CD4-positive, alpha-beta memory T cell (primary cell): ENCODE measurements at regions of chr5 and their contacts with region 1.

Region 1: DNA sequence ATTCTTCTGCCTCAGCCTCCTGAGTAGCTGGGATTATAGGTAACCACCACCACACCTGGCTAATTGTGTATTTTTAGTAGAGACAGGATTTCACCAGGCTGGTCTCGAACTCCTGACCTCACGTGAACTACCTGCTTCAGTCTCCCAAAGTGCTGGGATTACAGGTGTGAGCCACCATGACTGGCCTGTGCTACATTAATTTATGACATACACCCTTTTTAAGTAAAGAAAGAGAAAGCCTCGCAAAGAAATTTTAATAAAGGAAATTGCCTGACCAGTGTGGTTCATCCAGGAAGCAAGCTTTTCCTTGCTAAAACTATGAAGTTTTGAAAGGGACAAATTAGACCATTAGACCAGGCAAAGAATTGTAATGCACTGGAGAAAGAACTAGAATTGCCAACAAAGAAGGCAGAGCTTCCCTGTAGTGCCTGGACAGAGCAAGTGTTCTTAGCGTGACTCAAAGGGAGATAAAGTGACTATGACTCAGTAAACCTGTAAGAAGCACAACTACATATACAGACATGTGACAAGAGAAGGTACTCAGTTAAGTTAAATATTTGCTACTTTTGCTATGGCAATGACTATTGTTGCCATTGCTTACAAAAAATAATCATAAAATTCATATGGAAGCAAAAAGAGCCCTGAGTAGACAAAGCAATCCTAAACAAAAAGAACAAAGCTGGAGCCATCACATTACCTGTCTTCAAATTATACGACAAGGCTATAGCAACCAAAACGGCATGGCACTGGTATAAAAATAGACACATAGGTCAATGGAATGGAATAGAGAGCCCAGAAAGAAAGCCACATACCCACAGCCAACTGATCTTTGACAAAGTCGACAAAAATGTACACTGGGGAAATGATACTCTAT is 54.6 kb downstream of the FYB1 start:
- DNase-seq: peak in 2 of 5 donors; percentile 37 to 62
- H3K4me3 ChIP-seq: peak overlapping the region in 1 of 2 donors; percentile 34
- H3K4me3 Mint-ChIP-seq: peak overlapping the region; percentile 42 to 83 (median 78)
- H3K27ac ChIP-seq: peak overlapping the region; percentile 54
- H3K27ac Mint-ChIP-seq: peak overlapping the region; percentile 87 to 94 (median 94)
- H3K4me1 ChIP-seq: peaks cover 100% of the 10 kb centered on the region
- H3K4me1 Mint-ChIP-seq: peaks cover 68 to 96% (median 80%) of the 10 kb centered on the region in 4 donors
- H3K27me3 ChIP-seq: no peaks in the 10 kb centered on the region
- H3K27me3 Mint-ChIP-seq: no peaks in the 10 kb centered on the region

Region 2: DNA sequence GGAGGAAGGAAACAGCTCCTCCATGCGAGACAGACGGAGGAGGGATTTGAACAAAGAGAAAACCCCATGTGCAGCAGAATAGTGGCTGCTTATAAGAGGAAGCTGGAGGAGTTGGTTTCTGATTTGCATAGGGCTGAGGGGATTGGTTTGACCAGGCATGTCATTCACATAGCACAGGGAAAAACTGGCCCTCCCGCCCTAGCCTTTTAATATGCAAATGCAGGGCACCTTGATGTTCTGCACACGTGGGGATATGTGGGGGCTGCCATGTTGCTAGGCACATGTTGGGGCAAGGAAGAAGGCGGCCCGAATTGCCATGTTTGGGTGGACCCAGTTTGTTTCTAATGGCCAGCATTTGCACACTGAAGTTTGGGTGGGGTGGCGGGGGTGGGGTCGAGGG is 276.7 kb before region 1 on chr5:
- CTCF ChIA-PET with region 1: no interaction called
- POLR2A ChIA-PET with region 1: no interaction called
- intact Hi-C with region 1: no loop called
- DNase-seq: no peak
- H3K4me3 ChIP-seq: no peak overlapping the region
- H3K4me3 Mint-ChIP-seq: no peak overlapping the region
- H3K27ac ChIP-seq: no peak overlapping the region
- H3K27ac Mint-ChIP-seq: no peak overlapping the region
- H3K4me1 ChIP-seq: no peaks in the 10 kb centered on the region
- H3K4me1 Mint-ChIP-seq: peaks cover 0 to 1% (median 0%) of the 10 kb centered on the region in 4 donors
- H3K27me3 ChIP-seq: peaks cover 5% of the 10 kb centered on the region
- H3K27me3 Mint-ChIP-seq: peaks cover 12 to 14% of the 10 kb centered on the region in 2 donors

Region 3: GRCh38 chr5:39187831-39188731 is 23.3 kb after region 1 on chr5:
- CTCF ChIA-PET with region 1: interaction called, 252 read pairs
- POLR2A ChIA-PET with region 1: interaction called, 1,810 read pairs
- intact Hi-C with region 1: no loop called
- DNase-seq: peak in 2 of 5 donors; percentile 58 to 70
- H3K4me3 ChIP-seq: peak overlapping the region in 1 of 2 donors; percentile 9
- H3K4me3 Mint-ChIP-seq: peak overlapping the region; percentile 84 to 96 (median 90)
- H3K27ac ChIP-seq: peak overlapping the region; percentile 59
- H3K27ac Mint-ChIP-seq: peak overlapping the region; percentile 95 to 99 (median 99)
- H3K4me1 ChIP-seq: peaks cover 98% of the 10 kb centered on the region
- H3K4me1 Mint-ChIP-seq: peaks cover 71 to 96% (median 83%) of the 10 kb centered on the region in 4 donors
- H3K27me3 ChIP-seq: no peaks in the 10 kb centered on the region
- H3K27me3 Mint-ChIP-seq: no peaks in the 10 kb centered on the region

Region 4: GRCh38 chr5:39194466-39195136 is 29.8 kb after region 1 on chr5:
- CTCF ChIA-PET with region 1: interaction called, 252 read pairs
- POLR2A ChIA-PET with region 1: interaction called, 1,810 read pairs
- intact Hi-C with region 1: loop called (anchors 5 kb)
- DNase-seq: no peak
- H3K4me3 ChIP-seq: peak overlapping the region; percentile 13 to 49
- H3K4me3 Mint-ChIP-seq: peak overlapping the region; percentile 84 to 92 (median 88)
- H3K27ac ChIP-seq: peak overlapping the region; percentile 59
- H3K27ac Mint-ChIP-seq: peak overlapping the region; percentile 90 to 98 (median 95)
- H3K4me1 ChIP-seq: peaks cover 77% of the 10 kb centered on the region
- H3K4me1 Mint-ChIP-seq: peaks cover 53 to 79% (median 66%) of the 10 kb centered on the region in 4 donors
- H3K27me3 ChIP-seq: no peaks in the 10 kb centered on the region
- H3K27me3 Mint-ChIP-seq: no peaks in the 10 kb centered on the region

Region 5: GRCh38 chr5:39202597-39203274 is 38.0 kb after region 1 on chr5:
- CTCF ChIA-PET with region 1: interaction called, 14 read pairs
- POLR2A ChIA-PET with region 1: interaction called, 1,810 read pairs
- intact Hi-C with region 1: loop called (anchors 5 kb)
- DNase-seq: peak; percentile 59 to 70 (median 67)
- H3K4me3 ChIP-seq: peak overlapping the region; percentile 74 to 96
- H3K4me3 Mint-ChIP-seq: peak overlapping the region; percentile 94 to 100 (median 98)
- H3K27ac ChIP-seq: peak overlapping the region; percentile 84
- H3K27ac Mint-ChIP-seq: peak overlapping the region; percentile 91 to 99 (median 96)
- H3K4me1 ChIP-seq: peaks cover 44% of the 10 kb centered on the region
- H3K4me1 Mint-ChIP-seq: peaks cover 31 to 51% (median 40%) of the 10 kb centered on the region in 4 donors
- H3K27me3 ChIP-seq: no peaks in the 10 kb centered on the region
- H3K27me3 Mint-ChIP-seq: no peaks in the 10 kb centered on the region

Region 6: GRCh38 chr5:39452846-39453245 is 288.1 kb after region 1 on chr5:
- CTCF ChIA-PET with region 1: no interaction called
- POLR2A ChIA-PET with region 1: no interaction called
- intact Hi-C with region 1: no loop called
- DNase-seq: no peak
- H3K4me3 ChIP-seq: no peak overlapping the region
- H3K4me3 Mint-ChIP-seq: no peak overlapping the region
- H3K27ac ChIP-seq: no peak overlapping the region
- H3K27ac Mint-ChIP-seq: no peak overlapping the region
- H3K4me1 ChIP-seq: no peaks in the 10 kb centered on the region
- H3K4me1 Mint-ChIP-seq: no peaks in the 10 kb centered on the region
- H3K27me3 ChIP-seq: no peaks in the 10 kb centered on the region
- H3K27me3 Mint-ChIP-seq: peaks cover 8 to 21% of the 10 kb centered on the region in 2 donors